ENCODE measurements at regions of chr19 and their contacts with region 1.

Region 1: GRCh38 chr19:34963573-34964409 is at the start of gene ZNF792:
- DNase-seq: peak; percentile 52
- ATAC-seq: peak; percentile 82
- H3K4me3 Mint-ChIP-seq: peak within 1 kb of the TSS; percentile 88
- H3K27ac Mint-ChIP-seq: peak within 1 kb of the TSS; percentile 71
- H3K4me1 Mint-ChIP-seq: peaks cover 27% of the 10 kb centered on the region
- H3K27me3 Mint-ChIP-seq: no peaks in the 10 kb centered on the region
- CTCF ChIP-seq: no peak
- total RNA-seq, gene ZNF792: 4.8 and 4.9 TPM in 2 replicates

Region 2: GRCh38 chr19:33971073-33971472 is 992.7 kb before region 1 on chr19:
- CTCF ChIA-PET with region 1: no interaction called
- POLR2A ChIA-PET with region 1: no interaction called
- intact Hi-C with region 1: no loop called
- DNase-seq: no peak
- ATAC-seq: no peak
- H3K4me3 Mint-ChIP-seq: no peak overlapping the region
- H3K27ac Mint-ChIP-seq: no peak overlapping the region
- H3K4me1 Mint-ChIP-seq: no peaks in the 10 kb centered on the region
- H3K27me3 Mint-ChIP-seq: peaks cover 5% of the 10 kb centered on the region
- CTCF ChIP-seq: no peak

Region 3: DNA sequence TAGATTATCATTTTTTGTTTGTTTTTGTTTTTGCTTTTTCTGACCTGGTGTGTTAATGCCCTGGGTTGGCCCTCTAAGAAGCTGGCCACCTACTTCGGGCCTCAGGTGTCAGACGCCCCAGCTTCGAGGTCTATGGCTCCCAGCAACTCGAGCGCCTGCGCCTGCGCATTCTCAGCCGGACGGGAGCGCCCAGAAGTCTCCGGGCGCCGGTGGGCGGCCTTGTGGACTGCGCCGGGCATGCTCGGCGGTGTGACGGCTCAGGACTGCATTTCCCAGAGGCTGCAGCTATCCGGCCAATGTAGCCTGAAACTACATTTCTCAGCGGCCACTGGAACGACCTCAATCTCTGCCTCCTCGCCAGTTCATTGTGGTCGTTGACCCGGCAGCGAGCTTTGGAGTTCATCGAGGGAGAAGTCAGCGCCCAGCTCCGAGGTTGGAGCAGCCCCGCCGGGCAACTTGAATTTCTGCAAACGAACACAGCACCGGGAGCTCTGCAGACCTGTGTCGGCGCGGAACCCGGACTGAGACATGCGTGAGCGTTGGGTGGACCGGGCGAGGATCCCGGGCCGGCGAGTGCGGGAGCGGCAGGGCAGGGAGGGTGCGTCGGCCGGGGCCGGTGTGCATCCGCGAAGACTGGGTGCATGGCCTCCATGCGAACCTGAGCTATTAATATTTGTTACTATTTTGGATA is 37.0 kb before region 1 on chr19 and contains the start of gene ZNF30:
- CTCF ChIA-PET with region 1: no interaction called
- POLR2A ChIA-PET with region 1: interaction called, 5 read pairs
- intact Hi-C with region 1: loop called (anchors 5 kb)
- DNase-seq: peak; percentile 75
- ATAC-seq: peak; percentile 98
- H3K4me3 Mint-ChIP-seq: peak within 1 kb of the TSS; percentile 93
- H3K27ac Mint-ChIP-seq: peak within 1 kb of the TSS; percentile 75
- H3K4me1 Mint-ChIP-seq: peaks cover 14% of the 10 kb centered on the region
- H3K27me3 Mint-ChIP-seq: peaks cover 3% of the 10 kb centered on the region
- CTCF ChIP-seq: no peak
- total RNA-seq, gene ZNF30: 2.7 and 4.0 TPM in 2 replicates

Measured in activated B cell treated with CpG ODN at 0.5 μM for 24 hours (primary cell).